Activated naive CD4-positive, alpha-beta T cell treated with anti-CD3 and anti-CD28 coated beads, Interleukin-2, amount 10 ng/mL, durations not matched to agents 7 days and 5 days (primary cell): ENCODE measurements at regions of chr1 and their contacts with region 1.

Region 1: DNA sequence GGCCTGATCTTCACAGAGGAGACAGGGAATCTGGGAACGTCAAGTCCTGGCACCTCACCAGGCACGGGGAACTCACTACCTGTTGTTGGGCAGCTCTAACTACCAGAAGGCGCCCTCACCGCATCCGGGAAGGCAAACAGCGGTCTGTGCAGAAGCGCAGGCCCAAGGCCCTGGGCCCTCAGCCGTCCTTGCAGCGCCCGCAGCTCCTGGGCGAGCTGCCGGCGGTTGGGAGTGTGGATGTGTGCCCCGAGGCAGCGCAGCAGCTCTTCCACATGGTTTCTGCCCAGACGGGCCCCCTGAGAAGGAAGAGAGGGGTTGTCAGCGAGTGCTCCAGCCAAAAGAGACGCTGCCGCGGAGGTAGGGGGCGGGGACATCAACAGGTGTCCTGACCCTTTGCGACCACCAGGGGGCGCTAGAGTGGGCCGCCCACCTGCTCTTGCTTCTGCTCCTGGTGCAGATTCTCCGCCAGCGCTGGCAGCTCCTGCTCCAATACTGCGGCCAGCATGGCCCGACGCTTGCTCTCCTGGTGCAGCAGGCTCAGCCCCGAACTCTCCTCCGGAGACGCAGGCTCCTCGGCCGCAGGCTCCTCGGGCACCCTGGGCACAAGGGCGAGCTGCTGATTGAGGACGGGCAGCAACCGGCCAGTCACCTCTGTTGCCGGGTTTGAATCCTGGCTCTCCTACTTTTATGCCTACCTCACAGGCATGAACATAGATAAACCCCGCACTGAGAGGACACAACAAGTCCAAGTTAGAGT is 9.3 kb downstream of the MAP3K6 start:
- DNase-seq: peak; percentile 87
- H3K4me3 Mint-ChIP-seq: peak overlapping the region; percentile 67
- H3K27ac Mint-ChIP-seq: peak overlapping the region; percentile 88
- H3K4me1 Mint-ChIP-seq: peaks cover 41% of the 10 kb centered on the region
- H3K27me3 Mint-ChIP-seq: peaks cover 39% of the 10 kb centered on the region

Region 2: DNA sequence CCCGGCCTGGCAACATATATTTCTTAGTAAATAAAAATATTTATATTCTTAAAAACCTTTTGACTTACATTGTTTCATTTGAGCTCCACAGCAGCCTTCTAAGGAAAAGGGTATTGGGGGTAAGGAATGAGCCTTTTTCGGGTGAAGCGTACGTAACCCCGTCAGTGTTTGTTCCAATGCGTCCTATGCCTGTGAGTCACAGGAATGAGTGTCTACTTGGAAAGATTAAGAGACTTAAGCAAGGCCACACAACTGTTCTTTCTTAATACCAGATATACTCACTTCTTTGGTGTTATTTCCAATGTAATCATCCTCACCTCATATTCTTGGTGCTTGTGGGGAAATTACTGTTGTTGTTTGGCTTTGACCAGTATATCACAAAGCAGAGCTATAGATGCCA is 100.3 kb before region 1 on chr1:
- CTCF ChIA-PET with region 1: no interaction called
- DNase-seq: no peak
- H3K4me3 Mint-ChIP-seq: no peak overlapping the region
- H3K27ac Mint-ChIP-seq: no peak overlapping the region
- H3K4me1 Mint-ChIP-seq: peaks cover 28% of the 10 kb centered on the region
- H3K27me3 Mint-ChIP-seq: no peaks in the 10 kb centered on the region

Region 3: GRCh38 chr1:27341525-27342252 is 15.8 kb before region 1 on chr1 and contains the start of gene SYTL1:
- CTCF ChIA-PET with region 1: interaction called, 13 read pairs
- DNase-seq: peak; percentile 81
- H3K4me3 Mint-ChIP-seq: peak within 1 kb of the TSS; percentile 90
- H3K27ac Mint-ChIP-seq: peak within 1 kb of the TSS; percentile 90
- H3K4me1 Mint-ChIP-seq: peaks cover 59% of the 10 kb centered on the region
- H3K27me3 Mint-ChIP-seq: no peaks in the 10 kb centered on the region

Region 4: GRCh38 chr1:27346991-27347627 is 10.3 kb before region 1 on chr1:
- CTCF ChIA-PET with region 1: interaction called, 13 read pairs
- DNase-seq: no peak
- H3K4me3 Mint-ChIP-seq: no peak overlapping the region
- H3K27ac Mint-ChIP-seq: peak overlapping the region; percentile 24
- H3K4me1 Mint-ChIP-seq: peaks cover 42% of the 10 kb centered on the region
- H3K27me3 Mint-ChIP-seq: no peaks in the 10 kb centered on the region

Region 5: GRCh38 chr1:27392096-27392777 is 34.8 kb after region 1 on chr1 and contains the start of gene GPR3:
- CTCF ChIA-PET with region 1: interaction called, 38 read pairs
- DNase-seq: peak; percentile 96
- H3K4me3 Mint-ChIP-seq: peak within 1 kb of the TSS; percentile 71
- H3K27ac Mint-ChIP-seq: peak within 1 kb of the TSS; percentile 55
- H3K4me1 Mint-ChIP-seq: peaks cover 22% of the 10 kb centered on the region
- H3K27me3 Mint-ChIP-seq: peaks cover 35% of the 10 kb centered on the region